Spleen (tissue), 13 donors: ENCODE measurements at regions of chr17 and their contacts with region 1.

Region 1: DNA sequence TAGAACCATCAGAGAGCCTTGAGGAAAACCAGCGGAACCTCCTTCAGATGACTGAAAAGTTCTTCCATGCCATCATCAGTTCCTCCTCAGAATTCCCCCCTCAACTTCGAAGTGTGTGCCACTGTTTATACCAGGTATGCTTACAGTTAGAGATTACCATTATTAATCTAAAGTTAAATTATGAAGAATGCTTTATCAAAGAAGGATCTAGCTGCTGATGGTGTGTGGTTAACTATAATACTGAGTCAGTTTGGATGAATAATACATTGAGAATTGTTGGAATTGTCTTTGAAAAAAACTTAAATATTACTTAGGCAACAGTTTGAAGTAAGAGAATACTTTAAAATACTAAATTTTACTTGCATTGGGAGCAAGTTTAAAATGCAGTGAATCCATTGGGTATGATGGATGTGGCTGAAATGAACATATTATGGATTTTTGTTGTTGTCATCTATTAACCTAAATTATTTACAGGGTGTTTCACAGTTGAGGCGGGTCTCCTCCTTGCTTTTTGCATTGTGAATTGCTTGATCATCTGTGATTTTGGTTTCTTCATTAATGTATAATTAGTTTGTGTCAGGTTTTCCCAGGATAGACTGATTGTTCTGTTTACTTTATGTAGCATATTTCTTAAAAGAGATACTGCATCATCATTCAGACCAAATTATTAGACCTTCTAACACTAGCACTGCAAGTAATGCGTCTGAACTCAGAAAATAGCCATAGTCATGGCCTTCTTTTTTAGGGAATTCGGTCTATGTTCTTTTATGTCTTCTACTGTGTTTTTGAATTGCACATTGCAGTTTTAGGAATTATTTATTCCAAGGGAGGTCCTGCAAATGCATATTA is 47.8 kb downstream of the OMG start:
- DNase-seq: no peak
- H3K4me3 ChIP-seq: no peak overlapping the region
- H3K27ac ChIP-seq: peak overlapping the region in 1 of 8 donors; percentile 26
- H3K4me1 ChIP-seq: peaks cover 0 to 28% (median 16%) of the 10 kb centered on the region in 6 donors
- H3K27me3 ChIP-seq: no peaks in the 10 kb centered on the region
- CTCF ChIP-seq: no peak
- POLR2A ChIP-seq: no peak

Region 2: GRCh38 chr17:31309556-31309955 is 60.3 kb after region 1 on chr17:
- intact Hi-C with region 1: loop called (anchors 10 kb)
- DNase-seq: no peak
- H3K4me3 ChIP-seq: peak overlapping the region in 7 of 8 donors; percentile 18 to 73 (median 45)
- H3K27ac ChIP-seq: peak overlapping the region; percentile 83 to 94 (median 90)
- H3K4me1 ChIP-seq: peaks cover 17 to 74% (median 45%) of the 10 kb centered on the region in 6 donors
- H3K27me3 ChIP-seq: no peaks in the 10 kb centered on the region
- CTCF ChIP-seq: no peak
- POLR2A ChIP-seq: peak in 1 of 3 donors; percentile 41

Region 3: DNA sequence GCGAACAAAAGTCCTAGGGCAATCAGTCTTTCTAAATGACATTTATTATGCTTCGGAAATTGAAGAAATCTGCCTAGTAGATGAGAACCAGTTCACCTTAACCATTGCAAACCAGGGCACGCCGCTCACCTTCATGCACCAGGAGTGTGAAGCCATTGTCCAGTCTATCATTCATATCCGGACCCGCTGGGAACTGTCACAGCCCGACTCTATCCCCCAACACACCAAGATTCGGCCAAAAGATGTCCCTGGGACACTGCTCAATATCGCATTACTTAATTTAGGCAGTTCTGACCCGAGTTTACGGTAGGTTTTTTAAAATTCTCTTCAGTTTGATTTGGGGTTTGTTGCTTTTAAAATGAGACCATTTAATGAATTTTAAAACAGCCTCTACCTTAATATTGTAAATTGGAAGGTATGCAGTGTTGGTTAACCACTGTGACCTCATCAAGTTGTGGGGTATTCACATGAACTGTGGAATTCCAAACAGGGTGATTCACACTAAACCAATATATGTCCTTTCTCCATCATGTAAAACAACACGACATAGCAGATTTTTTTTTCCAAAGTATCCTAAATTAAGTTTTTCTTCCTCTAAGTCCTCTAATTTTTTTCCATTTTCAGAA is 78.4 kb after region 1 on chr17:
- intact Hi-C with region 1: no loop called
- DNase-seq: no peak
- H3K4me3 ChIP-seq: no peak overlapping the region
- H3K27ac ChIP-seq: no peak overlapping the region
- H3K4me1 ChIP-seq: peaks cover 0 to 5% (median 0%) of the 10 kb centered on the region in 6 donors
- H3K27me3 ChIP-seq: no peaks in the 10 kb centered on the region
- CTCF ChIP-seq: no peak
- POLR2A ChIP-seq: no peak